ENCODE measurements at regions of chr6 and their contacts with region 1.

Region 1: GRCh38 chr6:149840345-149841075 is 23.6 kb downstream of the LRP11 start:
- DNase-seq: peak; percentile 77
- ATAC-seq: peak; percentile 93
- H3K4me3 ChIP-seq: no peak overlapping the region
- H3K27ac ChIP-seq: no peak overlapping the region
- H3K4me1 ChIP-seq: no peaks in the 10 kb centered on the region
- H3K27me3 ChIP-seq: no peaks in the 10 kb centered on the region
- CTCF ChIP-seq: peak; percentile 64

Region 2: DNA sequence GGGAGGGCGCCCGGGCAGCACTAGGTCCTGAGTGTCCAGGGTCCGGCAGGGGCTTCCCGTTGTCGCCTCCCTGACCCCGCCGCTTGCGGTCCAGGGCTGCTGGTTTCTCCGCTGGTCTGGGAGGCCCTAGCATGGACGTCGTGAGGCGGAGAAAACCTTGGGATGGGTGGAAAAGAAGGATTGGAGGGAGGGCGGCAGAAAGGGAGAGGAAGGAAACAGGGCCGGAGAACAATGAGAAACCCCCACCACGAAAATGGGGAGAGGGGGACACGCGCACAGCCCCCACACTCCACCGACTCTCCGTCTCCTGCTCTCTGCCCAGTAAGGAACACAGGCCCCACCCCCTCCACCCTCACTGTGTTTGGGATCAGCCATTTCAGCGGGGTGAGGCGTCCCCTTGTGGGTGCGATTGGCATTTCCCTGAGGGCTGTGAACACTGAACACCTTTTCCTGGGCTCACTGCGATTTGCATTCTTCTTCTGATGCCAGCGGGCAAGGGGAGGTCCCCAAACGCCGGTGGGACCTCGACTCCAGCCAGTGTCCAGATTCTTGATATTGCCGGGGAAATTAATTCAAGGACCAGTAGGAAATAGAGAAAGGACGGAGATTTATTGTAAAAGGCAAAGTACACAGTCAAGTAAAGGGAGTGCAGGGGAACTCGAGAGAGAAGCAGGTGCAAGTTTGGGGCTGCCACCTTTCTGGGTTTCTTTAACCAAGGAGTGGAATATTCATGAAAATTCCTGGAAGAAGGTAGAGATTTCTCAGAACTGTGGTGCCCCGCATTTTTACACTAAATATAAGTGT is 85.7 kb after region 1 on chr6:
- intact Hi-C with region 1: loop called (anchors 5 kb)
- DNase-seq: peak; percentile 93
- ATAC-seq: peak; percentile 94
- H3K4me3 ChIP-seq: peak overlapping the region; percentile 58
- H3K27ac ChIP-seq: peak overlapping the region; percentile 51
- H3K4me1 ChIP-seq: peaks cover 16% of the 10 kb centered on the region
- H3K27me3 ChIP-seq: peaks cover 22% of the 10 kb centered on the region
- CTCF ChIP-seq: peak; percentile 85

Measured in upper lobe of right lung (tissue), 1 donor.